Activated B cell treated with CpG ODN at 0.5 μM for 24 hours (primary cell): ENCODE measurements at regions of chr11 and their contacts with region 1.

Region 1: DNA sequence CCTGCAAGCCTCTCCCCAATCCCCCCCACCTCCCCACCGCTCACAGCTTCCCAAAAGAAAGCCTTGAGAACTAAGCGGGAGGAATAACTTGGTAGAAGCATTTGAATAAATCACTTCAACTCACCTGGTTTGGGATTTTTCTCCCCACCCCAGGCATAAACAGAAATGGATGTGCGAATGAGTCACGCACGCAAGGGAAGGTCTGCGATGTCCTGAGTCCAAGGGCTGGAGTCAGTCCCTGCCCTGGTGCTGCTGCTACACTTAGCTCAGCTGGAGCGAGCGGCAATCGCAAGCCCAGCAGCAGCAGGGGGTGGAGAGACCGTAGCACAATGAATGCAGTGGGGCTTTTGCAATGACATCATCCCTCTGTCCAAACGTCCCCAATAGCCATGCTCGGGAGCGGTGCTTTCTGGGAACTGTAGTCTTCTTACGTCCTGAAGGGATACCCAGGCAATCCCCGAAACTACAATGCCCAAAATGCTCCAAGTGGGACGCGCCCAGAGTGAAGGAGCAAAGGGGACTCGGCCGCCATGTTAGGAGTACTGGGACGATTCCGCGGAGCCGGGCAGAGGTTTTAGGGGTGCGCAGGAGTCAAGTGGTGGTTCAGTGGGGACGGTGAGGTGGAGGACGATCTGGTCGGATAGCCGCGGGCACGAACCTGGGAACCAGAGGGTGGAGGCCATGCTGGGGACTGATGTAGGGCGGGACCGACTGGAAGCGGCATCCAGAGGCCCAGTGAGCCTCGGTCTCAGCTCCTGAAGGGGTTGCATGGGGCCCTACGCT is at the start of gene RAB30:
- DNase-seq: peak; percentile 75
- ATAC-seq: peak; percentile 94
- H3K4me3 Mint-ChIP-seq: no peak within 1 kb of the TSS
- H3K27ac Mint-ChIP-seq: no peak within 1 kb of the TSS
- H3K4me1 Mint-ChIP-seq: peaks cover 66% of the 10 kb centered on the region
- H3K27me3 Mint-ChIP-seq: no peaks in the 10 kb centered on the region
- CTCF ChIP-seq: no peak
- total RNA-seq, gene RAB30: 160 and 173 TPM in 2 replicates

Region 2: GRCh38 chr11:82927254-82927880 is 144.4 kb before region 1 on chr11:
- CTCF ChIA-PET with region 1: interaction called, 4 read pairs
- POLR2A ChIA-PET with region 1: interaction called, 24 read pairs
- intact Hi-C with region 1: no loop called
- DNase-seq: no peak
- ATAC-seq: peak; percentile 76
- H3K4me3 Mint-ChIP-seq: peak overlapping the region; percentile 45
- H3K27ac Mint-ChIP-seq: peak overlapping the region; percentile 75
- H3K4me1 Mint-ChIP-seq: peaks cover 85% of the 10 kb centered on the region
- H3K27me3 Mint-ChIP-seq: no peaks in the 10 kb centered on the region
- CTCF ChIP-seq: no peak

Region 3: DNA sequence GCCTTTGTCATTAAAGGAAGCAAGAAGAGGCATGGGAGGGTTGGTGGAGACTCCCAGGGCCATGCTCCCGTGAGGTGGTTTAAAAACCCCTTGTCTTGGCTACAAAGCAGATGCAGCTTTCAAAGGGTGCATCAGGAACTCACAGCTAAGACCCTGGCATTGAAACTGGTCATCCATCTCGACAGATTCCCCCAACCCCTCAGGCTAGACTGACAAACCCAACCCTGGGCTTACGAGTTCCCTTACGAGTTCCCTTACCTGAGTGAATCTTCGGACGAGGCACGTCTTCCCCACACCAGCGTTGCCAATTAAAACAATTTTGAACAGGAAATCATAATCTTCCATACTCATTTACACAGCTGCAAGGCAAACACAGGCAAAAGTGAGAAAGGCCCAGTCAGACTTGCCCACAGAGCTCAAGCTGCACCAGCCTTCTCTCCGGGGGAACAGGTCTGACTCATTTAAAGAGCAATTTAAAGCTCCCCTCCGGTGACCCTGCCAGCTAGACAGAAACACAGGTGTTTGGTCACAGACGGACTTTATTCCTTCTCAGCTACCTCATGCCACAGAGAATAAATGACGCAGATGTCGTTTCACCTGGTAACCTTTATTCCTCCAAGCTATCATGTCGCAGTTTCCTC is 74.7 kb before region 1 on chr11:
- CTCF ChIA-PET with region 1: interaction called, 4 read pairs
- POLR2A ChIA-PET with region 1: interaction called, 22 read pairs
- intact Hi-C with region 1: loop called (anchors 1 kb)
- DNase-seq: no peak
- ATAC-seq: peak; percentile 88
- H3K4me3 Mint-ChIP-seq: peak overlapping the region; percentile 75
- H3K27ac Mint-ChIP-seq: peak overlapping the region; percentile 84
- H3K4me1 Mint-ChIP-seq: peaks cover 93% of the 10 kb centered on the region
- H3K27me3 Mint-ChIP-seq: no peaks in the 10 kb centered on the region
- CTCF ChIP-seq: no peak

Region 4: DNA sequence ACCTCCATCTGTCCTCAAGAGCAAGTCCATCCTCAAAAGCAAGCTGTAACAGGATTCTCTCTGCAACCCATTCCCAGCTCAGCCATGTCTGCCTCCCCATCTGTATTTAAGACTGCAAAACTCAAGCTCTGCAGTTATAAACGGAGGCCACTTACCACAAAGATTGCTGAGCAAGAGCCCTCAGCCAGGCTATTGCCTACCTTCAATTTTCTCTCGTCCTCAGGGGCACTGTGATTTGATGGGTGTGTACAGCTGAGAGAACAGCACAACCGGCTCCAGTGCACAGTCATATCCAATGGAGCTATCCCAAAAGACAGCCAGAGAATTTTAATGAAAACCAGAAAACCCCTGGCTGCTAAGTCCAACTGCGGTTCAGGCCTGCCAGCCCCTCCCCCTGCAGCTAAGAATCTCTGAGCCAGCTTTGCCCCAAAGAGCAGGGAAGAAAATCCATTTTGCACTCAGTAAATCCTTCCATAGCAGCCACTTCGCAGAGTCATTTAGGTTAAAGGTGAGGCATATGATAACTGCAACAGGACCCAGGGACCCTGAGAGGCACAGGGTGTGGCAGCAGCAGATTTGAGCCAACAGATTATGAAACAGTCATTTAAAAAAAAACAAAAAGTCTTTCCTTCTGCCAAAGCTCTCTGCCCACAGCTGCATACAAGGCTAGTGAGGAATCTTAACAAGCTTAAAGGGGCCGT is 37.6 kb before region 1 on chr11:
- CTCF ChIA-PET with region 1: no interaction called
- POLR2A ChIA-PET with region 1: interaction called, 54 read pairs
- intact Hi-C with region 1: loop called (anchors 1 kb)
- DNase-seq: no peak
- ATAC-seq: no peak
- H3K4me3 Mint-ChIP-seq: peak overlapping the region; percentile 62
- H3K27ac Mint-ChIP-seq: peak overlapping the region; percentile 75
- H3K4me1 Mint-ChIP-seq: peaks cover 79% of the 10 kb centered on the region
- H3K27me3 Mint-ChIP-seq: no peaks in the 10 kb centered on the region
- CTCF ChIP-seq: no peak

Region 5: GRCh38 chr11:83087035-83087434 is 15.3 kb after region 1 on chr11:
- CTCF ChIA-PET with region 1: interaction called, 3 read pairs
- POLR2A ChIA-PET with region 1: interaction called, 3 read pairs
- intact Hi-C with region 1: loop called (anchors 1 kb)
- DNase-seq: no peak
- ATAC-seq: no peak
- H3K4me3 Mint-ChIP-seq: no peak overlapping the region
- H3K27ac Mint-ChIP-seq: no peak overlapping the region
- H3K4me1 Mint-ChIP-seq: peaks cover 19% of the 10 kb centered on the region
- H3K27me3 Mint-ChIP-seq: no peaks in the 10 kb centered on the region
- CTCF ChIP-seq: no peak

Region 6: GRCh38 chr11:83193315-83194280 is 121.8 kb after region 1 on chr11 and contains the start of gene ANKRD42:
- CTCF ChIA-PET with region 1: no interaction called
- POLR2A ChIA-PET with region 1: interaction called, 6 read pairs
- intact Hi-C with region 1: loop called (anchors 1 kb)
- DNase-seq: peak; percentile 75
- ATAC-seq: peak; percentile 63
- H3K4me3 Mint-ChIP-seq: peak within 1 kb of the TSS; percentile 100
- H3K27ac Mint-ChIP-seq: peak within 1 kb of the TSS; percentile 98
- H3K4me1 Mint-ChIP-seq: peaks cover 51% of the 10 kb centered on the region
- H3K27me3 Mint-ChIP-seq: no peaks in the 10 kb centered on the region
- CTCF ChIP-seq: no peak
- total RNA-seq, gene ANKRD42: 6.6 and 7.4 TPM in 2 replicates

Region 7: GRCh38 chr11:83285771-83286528 is 214.2 kb after region 1 on chr11 and contains the start of gene CCDC90B:
- CTCF ChIA-PET with region 1: no interaction called
- POLR2A ChIA-PET with region 1: interaction called, 4 read pairs
- intact Hi-C with region 1: loop called (anchors 1 kb)
- DNase-seq: peak; percentile 86
- ATAC-seq: peak; percentile 88
- H3K4me3 Mint-ChIP-seq: peak within 1 kb of the TSS; percentile 99
- H3K27ac Mint-ChIP-seq: peak within 1 kb of the TSS; percentile 100
- H3K4me1 Mint-ChIP-seq: peaks cover 61% of the 10 kb centered on the region
- H3K27me3 Mint-ChIP-seq: no peaks in the 10 kb centered on the region
- CTCF ChIP-seq: no peak
- total RNA-seq, gene CCDC90B: 25.8 and 29.2 TPM in 2 replicates